CD4-positive, alpha-beta T cell (primary cell): ENCODE measurements at regions of chr19 and their contacts with region 1.

Region 1: DNA sequence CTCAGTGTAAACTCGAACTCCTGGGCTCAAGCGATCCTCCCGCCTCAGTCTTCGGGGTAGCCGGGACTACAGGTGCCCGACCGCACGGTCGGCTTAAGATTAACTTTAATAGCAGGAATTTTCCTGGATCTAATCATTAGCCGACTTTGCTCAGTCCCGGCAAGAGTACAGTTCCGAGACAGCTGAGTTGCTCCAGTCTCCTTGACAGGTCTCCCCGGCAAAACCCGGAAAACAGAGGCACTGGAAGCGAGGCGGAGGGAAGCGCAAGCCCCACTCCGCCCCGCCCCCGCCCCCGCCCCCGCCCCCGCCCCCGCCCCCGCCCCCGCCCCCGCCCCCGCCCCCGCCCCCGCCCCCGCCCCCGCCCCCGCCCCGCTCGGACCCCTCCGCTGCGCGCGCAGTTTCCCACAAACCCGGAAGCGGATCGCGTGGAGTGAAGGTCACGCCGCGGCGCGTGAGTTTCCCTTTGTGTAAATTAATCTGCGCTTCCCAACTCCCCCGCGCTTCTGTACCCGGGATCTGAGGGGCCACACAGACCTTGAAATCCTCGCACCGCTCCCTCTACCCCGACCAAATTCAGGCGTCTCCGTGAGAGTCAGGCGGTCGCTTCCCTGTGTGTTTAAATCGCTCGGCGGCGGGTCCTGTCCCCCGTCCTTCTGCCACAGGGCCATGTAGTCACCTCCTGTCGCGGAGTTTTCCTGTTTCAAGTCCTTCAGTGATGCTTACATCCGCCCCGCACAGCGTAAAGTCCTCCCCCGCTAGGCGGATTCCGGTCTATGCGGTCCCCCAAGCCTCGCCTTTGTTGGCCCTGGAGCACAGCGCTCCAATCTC is at the start of gene ZNF480:
- DNase-seq: peak; percentile 81 to 93 (median 87)
- ATAC-seq: peak; percentile 92
- H3K4me3 ChIP-seq: peak within 1 kb of the TSS; percentile 80
- H3K4me3 Mint-ChIP-seq: peak within 1 kb of the TSS; percentile 99
- H3K27ac ChIP-seq: peak within 1 kb of the TSS; percentile 87 to 95
- H3K27ac Mint-ChIP-seq: peak within 1 kb of the TSS; percentile 99
- H3K4me1 ChIP-seq: peaks cover 20% of the 10 kb centered on the region
- H3K4me1 Mint-ChIP-seq: peaks cover 18% of the 10 kb centered on the region
- H3K27me3 ChIP-seq: no peaks in the 10 kb centered on the region
- H3K27me3 Mint-ChIP-seq: peaks cover 4% of the 10 kb centered on the region
- CTCF ChIP-seq: no peak
- total RNA-seq, gene ZNF480: 4.8 to 5.3 TPM

Region 2: DNA sequence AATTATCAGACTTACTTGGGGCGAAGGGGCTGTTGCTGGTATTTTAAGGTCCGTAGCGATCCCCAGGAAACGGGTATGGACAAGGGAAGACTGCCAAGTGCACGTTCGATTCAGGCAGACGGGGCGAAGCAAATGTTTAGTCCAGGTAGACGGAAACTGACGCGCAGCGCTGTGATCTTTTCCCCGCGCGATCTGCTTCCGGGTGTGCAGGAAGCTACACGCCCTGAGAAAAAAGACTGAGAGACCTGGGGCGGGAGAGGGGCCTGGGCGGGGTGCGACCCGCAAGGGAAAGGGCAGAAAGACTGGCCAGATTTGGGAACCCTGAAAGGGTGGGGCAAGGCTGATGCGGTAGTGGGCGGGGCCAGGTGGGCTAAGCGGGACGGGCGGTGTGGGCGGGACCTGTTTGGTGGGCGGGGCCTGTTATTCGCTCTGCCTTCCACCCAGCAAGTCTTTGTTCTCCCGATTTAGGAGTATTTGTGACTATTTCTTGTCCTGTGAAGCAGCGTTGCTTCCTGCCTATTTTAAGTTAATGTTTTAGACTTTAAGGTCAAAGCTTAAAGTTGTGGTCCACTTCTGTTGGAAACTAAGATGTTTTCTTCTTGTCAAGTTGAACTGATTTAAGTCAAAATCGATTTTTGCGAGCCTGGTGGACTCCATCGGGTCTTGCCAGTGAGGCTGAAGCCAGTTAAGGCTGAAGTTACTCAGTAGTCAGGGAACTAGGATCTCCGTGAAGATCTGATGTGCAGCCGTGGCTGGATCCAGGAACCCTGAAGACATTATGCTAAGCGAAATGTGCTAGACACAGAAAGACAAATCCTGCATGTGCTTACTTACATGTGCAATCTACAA is 125.4 kb before region 1 on chr19 and contains the start of gene ZNF836:
- CTCF ChIA-PET with region 1: no interaction called
- POLR2A ChIA-PET with region 1: no interaction called
- intact Hi-C with region 1: loop called in 1 of 2 experiments (anchors 2 kb)
- DNase-seq: peak; percentile 84 to 97 (median 90)
- ATAC-seq: peak; percentile 92
- H3K4me3 ChIP-seq: peak within 1 kb of the TSS; percentile 79
- H3K4me3 Mint-ChIP-seq: peak within 1 kb of the TSS; percentile 93
- H3K27ac ChIP-seq: peak within 1 kb of the TSS; percentile 82 to 83
- H3K27ac Mint-ChIP-seq: peak within 1 kb of the TSS; percentile 95
- H3K4me1 ChIP-seq: peaks cover 26% of the 10 kb centered on the region
- H3K4me1 Mint-ChIP-seq: peaks cover 36% of the 10 kb centered on the region
- H3K27me3 ChIP-seq: no peaks in the 10 kb centered on the region
- H3K27me3 Mint-ChIP-seq: no peaks in the 10 kb centered on the region
- CTCF ChIP-seq: no peak
- total RNA-seq, gene ZNF836: 24.1 to 26.2 TPM

Region 3: DNA sequence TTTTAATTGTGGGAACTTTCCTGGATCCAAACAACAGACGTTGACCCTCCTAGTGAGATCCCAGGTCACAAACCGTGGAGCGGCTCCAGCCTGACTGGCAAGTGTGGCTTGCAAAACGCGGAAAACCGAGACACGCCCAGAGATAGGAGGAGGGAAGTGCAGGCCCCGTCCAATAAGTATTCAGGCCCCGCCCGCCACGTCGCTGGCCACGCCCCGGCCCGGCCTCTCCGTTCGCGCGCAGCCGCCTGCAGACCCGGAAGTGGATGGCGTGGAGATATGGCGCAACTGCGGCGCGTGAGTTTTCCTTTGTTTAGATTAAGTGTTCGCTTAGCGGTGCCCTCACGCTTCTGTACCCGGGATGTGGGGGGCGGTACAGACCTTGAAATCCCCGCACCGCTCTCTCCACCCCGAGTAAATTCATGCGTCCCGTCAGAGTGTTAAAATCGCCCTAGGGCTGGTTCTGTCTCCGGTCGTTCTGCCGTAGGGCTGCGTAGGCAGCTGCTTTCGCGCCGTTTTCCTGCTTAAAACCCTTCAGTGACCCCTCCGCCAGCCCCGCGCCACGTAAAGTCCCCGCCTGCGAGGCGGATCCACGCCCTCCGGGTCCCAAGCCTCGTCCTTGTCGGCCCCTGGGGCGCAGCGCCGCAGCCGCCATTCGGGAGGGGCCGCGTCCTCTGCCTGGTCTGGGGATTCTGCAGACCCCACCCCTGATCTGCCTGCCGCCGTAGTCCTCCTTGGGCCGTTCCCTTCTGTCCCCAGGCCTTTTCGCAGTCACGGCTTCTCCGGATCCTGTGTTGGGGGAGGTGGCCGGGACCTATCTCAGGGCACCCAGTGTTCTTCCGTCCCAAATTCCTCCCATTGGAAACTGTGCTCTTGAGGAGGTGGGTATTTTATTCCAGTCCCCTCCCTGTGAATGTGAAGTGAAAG is 27.4 kb before region 1 on chr19 and contains the start of gene ZNF766:
- CTCF ChIA-PET with region 1: no interaction called
- POLR2A ChIA-PET with region 1: no interaction called
- intact Hi-C with region 1: loop called in 1 of 2 experiments (anchors 2 kb)
- DNase-seq: peak; percentile 93 to 99 (median 97)
- ATAC-seq: peak; percentile 98
- H3K4me3 ChIP-seq: peak within 1 kb of the TSS; percentile 100
- H3K4me3 Mint-ChIP-seq: peak within 1 kb of the TSS; percentile 97
- H3K27ac ChIP-seq: peak within 1 kb of the TSS; percentile 95 to 97
- H3K27ac Mint-ChIP-seq: peak within 1 kb of the TSS; percentile 90
- H3K4me1 ChIP-seq: peaks cover 38% of the 10 kb centered on the region
- H3K4me1 Mint-ChIP-seq: peaks cover 46% of the 10 kb centered on the region
- H3K27me3 ChIP-seq: no peaks in the 10 kb centered on the region
- H3K27me3 Mint-ChIP-seq: no peaks in the 10 kb centered on the region
- CTCF ChIP-seq: no peak
- total RNA-seq, gene ZNF766: 39.3 to 43.2 TPM

Region 4: DNA sequence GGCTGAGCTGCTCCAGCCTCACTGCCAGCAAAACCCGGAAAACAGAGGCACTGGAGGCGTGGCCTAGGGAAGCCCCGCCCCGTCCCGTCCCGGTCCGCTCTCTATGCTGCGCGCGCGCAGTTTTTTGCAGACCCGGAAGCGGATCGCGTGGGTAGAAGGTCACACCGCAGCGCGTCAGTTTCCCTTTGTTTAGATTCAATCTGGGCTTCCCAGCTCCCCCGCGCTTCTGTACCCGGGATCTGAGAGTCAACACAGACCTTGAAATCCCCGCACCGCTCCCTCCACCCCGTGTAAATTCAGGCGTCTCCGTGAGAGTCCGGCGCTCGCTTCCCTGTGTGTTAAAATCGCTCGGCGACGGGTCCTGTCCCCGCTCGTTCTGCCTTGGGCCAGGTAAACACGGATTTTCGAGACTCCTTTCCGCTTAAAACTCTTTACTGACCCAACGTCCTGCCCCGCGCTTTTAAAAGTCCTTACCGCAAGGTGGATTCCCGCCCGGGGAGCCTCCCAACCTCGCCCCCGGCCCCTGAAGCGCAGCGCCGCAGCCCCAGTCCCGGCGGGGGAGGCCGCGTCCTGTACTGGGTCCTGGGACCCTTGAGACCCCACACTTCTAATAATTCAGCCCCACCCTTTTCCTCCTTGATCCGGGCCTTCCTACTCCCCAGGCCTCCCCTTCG is 39.3 kb after region 1 on chr19 and contains the start of gene ZNF610:
- CTCF ChIA-PET with region 1: no interaction called
- POLR2A ChIA-PET with region 1: no interaction called
- intact Hi-C with region 1: loop called in 1 of 2 experiments (anchors 5 kb)
- DNase-seq: peak; percentile 75 to 91 (median 84)
- ATAC-seq: peak; percentile 98
- H3K4me3 ChIP-seq: peak within 1 kb of the TSS; percentile 84
- H3K4me3 Mint-ChIP-seq: peak within 1 kb of the TSS; percentile 94
- H3K27ac ChIP-seq: peak within 1 kb of the TSS; percentile 69 to 79
- H3K27ac Mint-ChIP-seq: peak within 1 kb of the TSS; percentile 94
- H3K4me1 ChIP-seq: peaks cover 13% of the 10 kb centered on the region
- H3K4me1 Mint-ChIP-seq: peaks cover 17% of the 10 kb centered on the region
- H3K27me3 ChIP-seq: no peaks in the 10 kb centered on the region
- H3K27me3 Mint-ChIP-seq: no peaks in the 10 kb centered on the region
- CTCF ChIP-seq: no peak
- total RNA-seq, gene ZNF610: 0.52 to 0.53 TPM

Region 5: GRCh38 chr19:52369559-52370340 is 72.8 kb after region 1 on chr19 and contains the start of gene ZNF880:
- CTCF ChIA-PET with region 1: no interaction called
- POLR2A ChIA-PET with region 1: no interaction called
- intact Hi-C with region 1: loop called in 1 of 2 experiments (anchors 5 kb)
- DNase-seq: peak; percentile 80 to 93 (median 88)
- ATAC-seq: peak; percentile 95
- H3K4me3 ChIP-seq: peak within 1 kb of the TSS; percentile 84
- H3K4me3 Mint-ChIP-seq: peak within 1 kb of the TSS; percentile 92
- H3K27ac ChIP-seq: peak within 1 kb of the TSS; percentile 97
- H3K27ac Mint-ChIP-seq: peak within 1 kb of the TSS; percentile 97
- H3K4me1 ChIP-seq: peaks cover 15% of the 10 kb centered on the region
- H3K4me1 Mint-ChIP-seq: peaks cover 21% of the 10 kb centered on the region
- H3K27me3 ChIP-seq: no peaks in the 10 kb centered on the region
- H3K27me3 Mint-ChIP-seq: no peaks in the 10 kb centered on the region
- CTCF ChIP-seq: no peak
- total RNA-seq, gene ZNF880: 27.6 to 33.8 TPM

Region 6: GRCh38 chr19:52409941-52410675 is 113.1 kb after region 1 on chr19:
- CTCF ChIA-PET with region 1: no interaction called
- POLR2A ChIA-PET with region 1: no interaction called
- intact Hi-C with region 1: no loop called
- DNase-seq: no peak
- ATAC-seq: no peak
- H3K4me3 ChIP-seq: no peak overlapping the region
- H3K4me3 Mint-ChIP-seq: no peak overlapping the region
- H3K27ac ChIP-seq: no peak overlapping the region
- H3K27ac Mint-ChIP-seq: no peak overlapping the region
- H3K4me1 ChIP-seq: no peaks in the 10 kb centered on the region
- H3K4me1 Mint-ChIP-seq: no peaks in the 10 kb centered on the region
- H3K27me3 ChIP-seq: no peaks in the 10 kb centered on the region
- H3K27me3 Mint-ChIP-seq: no peaks in the 10 kb centered on the region
- CTCF ChIP-seq: no peak

Region 7: GRCh38 chr19:52622261-52622660 is 325.3 kb after region 1 on chr19:
- CTCF ChIA-PET with region 1: no interaction called
- POLR2A ChIA-PET with region 1: no interaction called
- intact Hi-C with region 1: no loop called
- DNase-seq: no peak
- ATAC-seq: no peak
- H3K4me3 ChIP-seq: no peak overlapping the region
- H3K4me3 Mint-ChIP-seq: no peak overlapping the region
- H3K27ac ChIP-seq: no peak overlapping the region
- H3K27ac Mint-ChIP-seq: no peak overlapping the region
- H3K4me1 ChIP-seq: no peaks in the 10 kb centered on the region
- H3K4me1 Mint-ChIP-seq: peaks cover 18% of the 10 kb centered on the region
- H3K27me3 ChIP-seq: no peaks in the 10 kb centered on the region
- H3K27me3 Mint-ChIP-seq: no peaks in the 10 kb centered on the region
- CTCF ChIP-seq: no peak

Region 8: DNA sequence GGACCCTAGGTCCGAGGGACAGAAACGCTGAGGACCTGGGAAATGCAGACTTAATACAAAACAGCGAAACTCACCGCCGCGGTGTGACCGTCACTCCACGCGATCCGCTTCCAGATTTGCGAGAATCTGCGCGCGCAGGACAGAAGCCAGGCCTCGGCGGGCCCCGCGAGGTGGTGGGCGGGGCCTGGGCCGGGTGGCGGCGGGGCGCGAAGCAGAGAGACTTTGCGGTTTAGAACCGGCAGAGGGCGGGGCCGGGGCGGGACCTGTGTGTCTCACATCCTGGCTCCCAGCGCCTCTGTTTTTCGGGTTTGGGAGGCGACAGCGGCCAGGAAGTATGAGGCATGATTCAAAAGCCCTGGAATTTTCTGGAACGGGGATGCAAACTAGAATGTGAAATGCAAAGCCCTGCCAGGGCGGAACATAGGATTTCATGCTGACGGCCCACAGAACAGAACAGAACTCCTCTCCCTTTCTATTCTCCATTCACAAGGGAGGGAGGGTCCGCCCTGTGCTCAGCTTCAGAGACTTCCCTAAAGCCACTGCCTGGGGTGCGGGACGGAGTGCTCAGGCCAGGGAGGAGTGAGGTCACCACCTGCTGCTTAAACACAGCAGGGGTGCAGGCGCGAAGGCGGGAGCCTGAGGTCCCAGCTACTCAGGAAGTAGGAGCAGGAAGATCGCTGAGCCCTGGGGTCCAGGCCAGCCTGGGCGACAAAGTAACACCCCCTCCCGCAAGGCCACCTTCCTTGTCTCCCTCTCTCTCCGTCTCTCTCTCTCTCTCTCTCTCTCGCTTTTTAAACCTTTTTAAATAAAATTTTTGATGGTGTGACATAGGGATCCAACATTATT is 393.6 kb after region 1 on chr19:
- CTCF ChIA-PET with region 1: no interaction called
- POLR2A ChIA-PET with region 1: no interaction called
- intact Hi-C with region 1: loop called in 1 of 2 experiments (anchors 2 kb)
- DNase-seq: peak; percentile 82 to 97 (median 90)
- ATAC-seq: peak; percentile 95
- H3K4me3 ChIP-seq: peak overlapping the region; percentile 82
- H3K4me3 Mint-ChIP-seq: peak overlapping the region; percentile 90
- H3K27ac ChIP-seq: peak overlapping the region; percentile 58 to 71
- H3K27ac Mint-ChIP-seq: peak overlapping the region; percentile 89
- H3K4me1 ChIP-seq: peaks cover 21% of the 10 kb centered on the region
- H3K4me1 Mint-ChIP-seq: peaks cover 34% of the 10 kb centered on the region
- H3K27me3 ChIP-seq: no peaks in the 10 kb centered on the region
- H3K27me3 Mint-ChIP-seq: no peaks in the 10 kb centered on the region
- CTCF ChIP-seq: no peak